WTC11 (cell line): ENCODE measurements at regions of chr17 and their contacts with region 1.

Region 1: GRCh38 chr17:63838603-63839171 is 3.8 kb downstream of the SMARCD2 start:
- DNase-seq: peak; percentile 33
- ATAC-seq: no peak
- H3K4me3 Mint-ChIP-seq: peak overlapping the region; percentile 43
- H3K27ac Mint-ChIP-seq: peak overlapping the region; percentile 77
- H3K4me1 Mint-ChIP-seq: peaks cover 39% of the 10 kb centered on the region
- H3K27me3 Mint-ChIP-seq: no peaks in the 10 kb centered on the region
- CTCF ChIP-seq: no peak

Region 2: DNA sequence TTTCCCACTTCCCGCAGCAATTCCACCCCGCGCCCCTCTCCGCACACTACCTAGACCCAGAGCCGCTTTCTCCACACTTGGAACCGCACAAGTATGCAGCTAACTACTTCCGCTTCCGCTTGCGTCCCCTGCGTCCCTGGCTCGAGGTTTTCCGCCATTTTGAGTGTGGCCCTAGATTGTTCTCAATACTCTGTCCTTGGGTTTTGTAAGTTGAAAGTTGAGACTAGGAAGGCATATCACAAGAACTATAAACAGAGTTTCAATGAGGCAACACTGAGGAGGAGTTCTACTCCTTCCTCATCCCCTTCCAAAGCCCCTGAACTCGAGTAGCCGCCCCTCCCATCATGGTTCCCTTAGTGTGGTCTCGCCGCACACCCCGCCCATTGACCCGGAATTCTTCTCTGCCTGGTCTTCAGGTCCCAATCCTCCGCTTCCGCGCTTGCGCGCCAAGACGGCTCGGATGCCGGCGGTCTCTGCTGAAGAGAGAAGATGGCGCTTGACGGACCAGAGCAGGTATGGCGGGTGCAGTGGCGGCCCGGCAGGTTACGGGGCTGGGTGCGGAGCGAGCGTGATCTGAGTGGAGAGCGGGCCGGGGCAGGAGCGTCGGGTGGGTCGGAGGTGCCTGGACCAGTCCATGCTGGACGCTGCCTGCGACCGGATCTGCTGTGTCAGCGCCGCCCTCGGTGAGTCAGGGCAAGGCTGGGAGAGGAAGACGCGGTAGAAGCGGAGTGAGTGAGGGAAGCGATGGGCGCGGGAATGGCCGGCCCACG is 11.5 kb before region 1 on chr17 and contains the starts of genes FTSJ3 and PSMC5:
- CTCF ChIA-PET with region 1: interaction called, 16 read pairs
- POLR2A ChIA-PET with region 1: interaction called, 7 read pairs
- DNase-seq: peak; percentile 92
- ATAC-seq: peak; percentile 92
- H3K4me3 Mint-ChIP-seq: peak within 1 kb of the TSS; percentile 96
- H3K27ac Mint-ChIP-seq: peak within 1 kb of the TSS; percentile 100
- H3K4me1 Mint-ChIP-seq: peaks cover 18% of the 10 kb centered on the region
- H3K27me3 Mint-ChIP-seq: no peaks in the 10 kb centered on the region
- CTCF ChIP-seq: no peak
- total RNA-seq, gene FTSJ3: 47.7 to 62.1 TPM (median 52.0 TPM) in 3 replicates
- total RNA-seq, gene PSMC5: 135 to 152 TPM (median 149 TPM) in 3 replicates

Region 3: GRCh38 chr17:63848834-63849700 is 10.4 kb after region 1 on chr17:
- CTCF ChIA-PET with region 1: interaction called, 12 read pairs
- POLR2A ChIA-PET with region 1: interaction called, 3 read pairs
- DNase-seq: peak; percentile 97
- ATAC-seq: peak; percentile 94
- H3K4me3 Mint-ChIP-seq: peak overlapping the region; percentile 60
- H3K27ac Mint-ChIP-seq: peak overlapping the region; percentile 97
- H3K4me1 Mint-ChIP-seq: no peaks in the 10 kb centered on the region
- H3K27me3 Mint-ChIP-seq: peaks cover 84% of the 10 kb centered on the region
- CTCF ChIP-seq: peak; percentile 35; the same call in 1 of the 2 replicates